ENCODE measurements at regions of chr11 and their contacts with region 1.

Region 1: GRCh38 chr11:130131961-130132850 is 27.4 kb upstream of the ST14 start:
- DNase-seq: no peak
- ATAC-seq: peak; percentile 65 to 92 (median 80)
- H3K4me3 ChIP-seq: no peak overlapping the region
- H3K27ac ChIP-seq: no peak overlapping the region
- H3K4me1 ChIP-seq: peaks cover 8% of the 10 kb centered on the region
- H3K27me3 ChIP-seq: no peaks in the 10 kb centered on the region
- CTCF ChIP-seq: peak; percentile 83

Region 2: DNA sequence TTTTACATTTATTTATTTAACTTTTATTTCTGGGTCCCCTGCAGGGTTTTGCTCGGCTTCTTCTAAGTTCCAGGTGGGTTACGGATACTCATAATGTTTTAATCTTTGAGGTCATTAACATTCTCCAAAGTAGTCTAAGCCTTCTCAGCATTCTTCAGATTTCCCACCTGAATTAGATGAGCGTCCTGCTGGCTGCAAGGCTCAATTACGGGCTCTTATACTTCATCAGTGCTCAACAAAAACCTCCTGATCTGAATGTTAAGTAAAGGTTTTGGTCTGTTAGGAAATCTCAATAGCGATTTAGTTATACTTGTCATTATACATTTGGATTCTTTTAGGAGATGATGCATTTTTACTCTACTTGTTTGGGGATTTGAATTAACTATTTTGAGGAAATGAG is 209.5 kb before region 1 on chr11:
- intact Hi-C with region 1: loop called (anchors 1 to 2 kb)
- DNase-seq: no peak
- ATAC-seq: no peak
- H3K4me3 ChIP-seq: no peak overlapping the region
- H3K27ac ChIP-seq: no peak overlapping the region
- H3K4me1 ChIP-seq: no peaks in the 10 kb centered on the region
- H3K27me3 ChIP-seq: no peaks in the 10 kb centered on the region
- CTCF ChIP-seq: no peak

Region 3: GRCh38 chr11:130002846-130003716 is 129.1 kb before region 1 on chr11:
- intact Hi-C with region 1: loop called (anchors 5 kb)
- DNase-seq: peak; percentile 91 to 98
- ATAC-seq: peak; percentile 86 to 89 (median 88)
- H3K4me3 ChIP-seq: peak overlapping the region; percentile 84
- H3K27ac ChIP-seq: peak overlapping the region; percentile 100
- H3K4me1 ChIP-seq: peaks cover 22% of the 10 kb centered on the region
- H3K27me3 ChIP-seq: no peaks in the 10 kb centered on the region
- CTCF ChIP-seq: no peak

Region 4: GRCh38 chr11:130069684-130070108 is 62.5 kb before region 1 on chr11 and contains the start of gene APLP2:
- intact Hi-C with region 1: loop called in 1 of 2 experiments (anchors 5 kb)
- DNase-seq: peak; percentile 99 to 100
- ATAC-seq: peak; percentile 92 to 96 (median 94)
- H3K4me3 ChIP-seq: peak within 1 kb of the TSS; percentile 93
- H3K27ac ChIP-seq: peak within 1 kb of the TSS; percentile 95
- H3K4me1 ChIP-seq: peaks cover 23% of the 10 kb centered on the region
- H3K27me3 ChIP-seq: no peaks in the 10 kb centered on the region
- CTCF ChIP-seq: no peak
- total RNA-seq, gene APLP2: 59.4 to 85.9 (median 65.3) TPM

Region 5: DNA sequence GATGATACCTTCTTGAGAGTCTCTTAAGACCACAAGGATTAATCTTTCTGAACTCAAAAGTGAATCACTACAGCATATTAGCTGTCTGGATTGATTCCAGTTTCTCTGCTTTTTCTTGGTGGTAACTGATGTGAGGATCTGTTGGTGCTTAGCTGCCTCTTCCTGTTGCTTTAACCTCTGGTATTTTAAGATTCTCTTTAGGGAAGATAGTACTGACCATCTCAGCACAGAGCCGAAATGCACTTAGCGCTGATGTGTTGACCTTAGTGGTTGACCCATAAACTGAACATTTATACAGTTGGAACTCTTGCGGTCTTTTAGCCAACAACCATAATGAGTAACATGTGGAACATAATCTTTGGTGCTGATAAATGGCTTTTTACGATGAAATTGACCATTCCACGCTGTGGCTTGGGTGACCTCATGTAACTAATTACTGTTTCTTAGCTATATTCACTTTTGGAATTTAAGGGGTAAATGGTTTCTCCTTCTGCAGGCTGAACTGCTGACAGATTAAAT is 28.9 kb before region 1 on chr11:
- intact Hi-C with region 1: no loop called
- DNase-seq: no peak
- ATAC-seq: peak; percentile 30 to 54 (median 44)
- H3K4me3 ChIP-seq: no peak overlapping the region
- H3K27ac ChIP-seq: peak overlapping the region; percentile 6
- H3K4me1 ChIP-seq: peaks cover 20% of the 10 kb centered on the region
- H3K27me3 ChIP-seq: no peaks in the 10 kb centered on the region
- CTCF ChIP-seq: no peak

Measured in psoas muscle (tissue), 8 donors.